ENCODE measurements at regions of chr12 and their contacts with region 1.

Region 1: GRCh38 chr12:121773011-121773777 is 20.3 kb downstream of the RHOF start:
- DNase-seq: peak; percentile 70 to 86 (median 76)
- H3K4me3 ChIP-seq: no peak overlapping the region
- H3K4me3 Mint-ChIP-seq: no peak overlapping the region
- H3K27ac ChIP-seq: no peak overlapping the region
- H3K27ac Mint-ChIP-seq: peak overlapping the region; percentile 15 to 94 (median 60)
- H3K4me1 ChIP-seq: peaks cover 23% of the 10 kb centered on the region
- H3K4me1 Mint-ChIP-seq: peaks cover 10 to 23% (median 11%) of the 10 kb centered on the region in 3 donors
- H3K27me3 ChIP-seq: no peaks in the 10 kb centered on the region
- H3K27me3 Mint-ChIP-seq: no peaks in the 10 kb centered on the region

Region 2: GRCh38 chr12:121697098-121697698 is 76.0 kb before region 1 on chr12:
- CTCF ChIA-PET with region 1: interaction called, 32 read pairs
- POLR2A ChIA-PET with region 1: no interaction called
- DNase-seq: peak in 2 of 5 donors; percentile 54 to 61
- H3K4me3 ChIP-seq: no peak overlapping the region
- H3K4me3 Mint-ChIP-seq: peak overlapping the region in 1 of 7 donors; percentile 32
- H3K27ac ChIP-seq: no peak overlapping the region
- H3K27ac Mint-ChIP-seq: no peak overlapping the region
- H3K4me1 ChIP-seq: peaks cover 4% of the 10 kb centered on the region
- H3K4me1 Mint-ChIP-seq: peaks cover 2 to 6% (median 5%) of the 10 kb centered on the region in 3 donors
- H3K27me3 ChIP-seq: no peaks in the 10 kb centered on the region
- H3K27me3 Mint-ChIP-seq: no peaks in the 10 kb centered on the region

Region 3: GRCh38 chr12:121712461-121713256 is 60.5 kb before region 1 on chr12 and contains the start of gene TMEM120B:
- CTCF ChIA-PET with region 1: interaction called, 15 read pairs
- POLR2A ChIA-PET with region 1: no interaction called
- DNase-seq: peak; percentile 75 to 91 (median 86)
- H3K4me3 ChIP-seq: peak within 1 kb of the TSS; percentile 89
- H3K4me3 Mint-ChIP-seq: peak within 1 kb of the TSS; percentile 92 to 99 (median 95)
- H3K27ac ChIP-seq: peak within 1 kb of the TSS; percentile 70
- H3K27ac Mint-ChIP-seq: peak within 1 kb of the TSS; percentile 86 to 99 (median 92)
- H3K4me1 ChIP-seq: peaks cover 17% of the 10 kb centered on the region
- H3K4me1 Mint-ChIP-seq: peaks cover 14 to 26% (median 18%) of the 10 kb centered on the region in 3 donors
- H3K27me3 ChIP-seq: no peaks in the 10 kb centered on the region
- H3K27me3 Mint-ChIP-seq: peaks cover 0 to 2% of the 10 kb centered on the region in 2 donors
- total RNA-seq, gene TMEM120B: 12.5 to 15.2 TPM

Region 4: DNA sequence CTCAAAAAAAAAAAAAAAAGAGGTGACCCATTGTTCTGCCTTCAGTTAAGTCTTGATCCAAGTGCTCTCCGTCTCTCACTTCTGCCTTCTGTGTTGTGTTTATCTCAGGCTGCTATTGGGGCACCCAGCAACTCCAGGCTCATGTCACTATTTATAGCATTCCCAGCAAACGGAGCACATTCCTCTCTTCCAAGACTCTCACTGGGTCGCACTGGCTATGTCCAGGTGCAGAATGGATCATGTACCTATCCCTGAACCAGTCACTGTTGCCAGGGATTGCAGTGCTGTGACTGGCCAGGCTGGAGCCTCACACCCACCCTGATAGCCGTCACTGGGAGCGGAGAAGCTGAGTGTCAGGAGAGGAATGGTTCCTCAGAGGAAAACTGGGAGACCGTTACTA is 10.9 kb before region 1 on chr12:
- CTCF ChIA-PET with region 1: interaction called, 11 read pairs
- POLR2A ChIA-PET with region 1: no interaction called
- DNase-seq: no peak
- H3K4me3 ChIP-seq: no peak overlapping the region
- H3K4me3 Mint-ChIP-seq: no peak overlapping the region
- H3K27ac ChIP-seq: no peak overlapping the region
- H3K27ac Mint-ChIP-seq: no peak overlapping the region
- H3K4me1 ChIP-seq: no peaks in the 10 kb centered on the region
- H3K4me1 Mint-ChIP-seq: no peaks in the 10 kb centered on the region
- H3K27me3 ChIP-seq: no peaks in the 10 kb centered on the region
- H3K27me3 Mint-ChIP-seq: no peaks in the 10 kb centered on the region